Naive thymus-derived CD8-positive, alpha-beta T cell (primary cell): ENCODE measurements at regions of chr6 and their contacts with region 1.

Region 1: GRCh38 chr6:7107578-7108195 is at the start of gene RREB1:
- DNase-seq: peak; percentile 37 to 78 (median 56)
- ATAC-seq: peak; percentile 54
- H3K4me3 Mint-ChIP-seq: peak within 1 kb of the TSS; percentile 93 to 97 (median 94)
- H3K27ac Mint-ChIP-seq: peak within 1 kb of the TSS; percentile 95 to 98 (median 96)
- H3K4me1 Mint-ChIP-seq: peaks cover 27 to 40% (median 35%) of the 10 kb centered on the region in 4 donors
- H3K27me3 Mint-ChIP-seq: no peaks in the 10 kb centered on the region
- polyA plus RNA-seq, gene RREB1: 2.5 to 5.8 (median 5.0) TPM

Region 2: GRCh38 chr6:7051233-7052114 is 56.2 kb before region 1 on chr6:
- POLR2A ChIA-PET with region 1: interaction called, 22 read pairs
- DNase-seq: peak; percentile 53 to 79 (median 58)
- ATAC-seq: peak; percentile 78 to 84
- H3K4me3 Mint-ChIP-seq: peak overlapping the region; percentile 68 to 90 (median 75)
- H3K27ac Mint-ChIP-seq: peak overlapping the region in 6 of 10 donors; percentile 52 to 84 (median 80)
- H3K4me1 Mint-ChIP-seq: peaks cover 6 to 24% (median 14%) of the 10 kb centered on the region in 4 donors
- H3K27me3 Mint-ChIP-seq: no peaks in the 10 kb centered on the region

Region 3: DNA sequence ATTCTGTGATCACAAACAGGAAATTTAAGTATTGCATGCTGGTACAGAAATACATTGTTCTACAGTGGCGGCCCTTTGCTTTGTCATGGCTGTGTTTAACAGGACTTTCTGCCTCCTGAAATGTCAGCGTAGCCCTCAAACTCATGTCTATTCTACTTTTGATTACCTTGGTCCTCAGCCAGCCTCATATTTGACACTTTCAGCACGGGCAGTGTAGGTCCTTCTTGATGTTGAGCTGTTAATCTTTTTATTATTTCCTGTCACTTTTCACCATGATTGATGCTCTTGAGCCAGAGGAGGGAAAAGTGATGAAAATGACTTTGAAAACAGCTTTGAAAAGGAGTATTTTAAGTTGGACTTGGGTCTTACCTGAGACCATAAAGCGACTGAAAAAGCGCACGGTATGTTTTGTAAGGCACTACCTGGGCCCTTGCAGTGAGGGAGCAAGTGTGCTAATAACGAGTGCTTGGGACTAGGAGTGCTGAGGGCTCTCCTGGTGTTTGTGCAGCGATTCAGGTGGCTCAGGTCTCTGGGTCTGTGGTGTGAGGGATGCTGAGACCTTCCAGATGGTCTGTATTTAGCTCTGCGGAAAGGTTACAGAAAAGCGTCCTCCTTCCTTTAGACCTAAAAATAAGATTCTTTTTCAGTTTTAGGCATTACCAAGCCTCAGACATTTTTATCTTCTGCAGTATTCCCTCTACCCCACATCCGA is 45.1 kb before region 1 on chr6:
- POLR2A ChIA-PET with region 1: no interaction called
- DNase-seq: no peak
- ATAC-seq: no peak
- H3K4me3 Mint-ChIP-seq: no peak overlapping the region
- H3K27ac Mint-ChIP-seq: no peak overlapping the region
- H3K4me1 Mint-ChIP-seq: peaks cover 0 to 2% (median 0%) of the 10 kb centered on the region in 4 donors
- H3K27me3 Mint-ChIP-seq: no peaks in the 10 kb centered on the region

Region 4: DNA sequence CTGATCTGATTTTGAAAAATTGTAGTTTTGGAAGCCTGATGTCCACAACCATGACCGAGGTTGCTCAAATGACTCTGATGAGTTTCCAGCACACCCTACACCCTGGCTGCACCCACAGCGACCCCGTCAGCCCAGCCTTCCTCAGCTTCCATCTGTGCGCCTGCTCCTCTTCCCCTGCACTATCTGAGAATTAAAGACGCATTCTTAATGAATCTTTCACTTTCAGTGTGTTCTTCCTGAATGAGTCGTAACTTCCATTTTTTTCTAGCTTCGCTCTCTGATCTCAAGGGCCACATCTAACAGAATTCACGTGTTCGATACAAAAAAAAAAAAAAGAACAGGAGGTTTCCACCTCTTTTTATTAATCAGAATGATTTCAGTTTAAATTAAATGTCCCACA is 21.2 kb before region 1 on chr6:
- POLR2A ChIA-PET with region 1: interaction called, 24 read pairs
- DNase-seq: peak in 9 of 10 donors; percentile 7 to 52 (median 26)
- ATAC-seq: peak; percentile 71 to 82
- H3K4me3 Mint-ChIP-seq: peak overlapping the region; percentile 73 to 89 (median 85)
- H3K27ac Mint-ChIP-seq: peak overlapping the region; percentile 77 to 95 (median 90)
- H3K4me1 Mint-ChIP-seq: peaks cover 19 to 49% (median 40%) of the 10 kb centered on the region in 4 donors
- H3K27me3 Mint-ChIP-seq: no peaks in the 10 kb centered on the region

Region 5: GRCh38 chr6:7129784-7130569 is 22.3 kb after region 1 on chr6:
- POLR2A ChIA-PET with region 1: interaction called, 139 read pairs
- DNase-seq: no peak
- ATAC-seq: no peak
- H3K4me3 Mint-ChIP-seq: peak overlapping the region in 9 of 10 donors; percentile 36 to 77 (median 66)
- H3K27ac Mint-ChIP-seq: peak overlapping the region; percentile 45 to 96 (median 90)
- H3K4me1 Mint-ChIP-seq: peaks cover 52 to 90% (median 82%) of the 10 kb centered on the region in 4 donors
- H3K27me3 Mint-ChIP-seq: no peaks in the 10 kb centered on the region

Region 6: DNA sequence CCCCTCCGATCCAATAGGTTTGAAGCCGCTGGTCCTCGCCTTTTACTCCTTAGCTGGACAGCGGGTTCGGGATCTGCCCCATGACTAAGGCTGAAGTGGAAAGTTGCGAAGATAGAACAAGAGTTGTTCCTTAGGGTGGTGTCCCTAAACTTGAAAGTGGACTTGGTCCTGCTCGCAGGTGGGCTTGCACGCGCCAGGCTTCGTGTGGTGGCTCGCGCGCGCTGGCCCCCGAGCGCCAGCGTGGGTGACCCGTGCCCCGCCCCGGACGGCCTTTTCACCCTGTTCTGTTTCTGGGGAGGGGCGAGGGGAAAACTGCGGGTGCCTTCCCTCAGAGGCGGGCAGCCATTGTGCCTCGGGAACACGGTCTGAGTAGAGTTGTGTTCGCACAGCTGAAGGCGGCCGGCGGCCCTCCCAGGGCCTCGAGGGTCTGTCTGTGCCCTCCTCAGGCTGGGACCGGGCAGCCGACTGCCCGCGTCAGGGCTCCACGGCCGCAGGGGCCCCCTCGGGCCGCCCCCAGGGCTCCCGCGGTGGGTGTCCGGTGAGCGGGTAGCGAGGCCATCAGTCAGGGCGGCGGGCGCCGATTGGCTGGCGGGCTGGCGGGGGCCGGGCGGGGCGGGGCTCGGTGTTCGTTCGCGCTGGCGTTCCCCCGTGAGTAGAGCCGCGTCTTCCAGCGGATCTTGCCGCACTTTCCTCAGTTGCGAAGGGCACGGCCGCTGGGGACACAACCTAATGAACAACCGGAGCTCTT is 33.1 kb after region 1 on chr6:
- POLR2A ChIA-PET with region 1: interaction called, 20 read pairs
- DNase-seq: peak; percentile 59 to 86 (median 78)
- ATAC-seq: peak; percentile 74 to 81
- H3K4me3 Mint-ChIP-seq: peak overlapping the region; percentile 80 to 92 (median 88)
- H3K27ac Mint-ChIP-seq: peak overlapping the region; percentile 80 to 97 (median 94)
- H3K4me1 Mint-ChIP-seq: peaks cover 28 to 79% (median 62%) of the 10 kb centered on the region in 4 donors
- H3K27me3 Mint-ChIP-seq: no peaks in the 10 kb centered on the region

Region 7: GRCh38 chr6:7196019-7196402 is 88.3 kb after region 1 on chr6:
- POLR2A ChIA-PET with region 1: interaction called, 11 read pairs
- DNase-seq: peak in 5 of 10 donors; percentile 9 to 37 (median 32)
- ATAC-seq: peak; percentile 91
- H3K4me3 Mint-ChIP-seq: peak overlapping the region in 9 of 10 donors; percentile 38 to 86 (median 68)
- H3K27ac Mint-ChIP-seq: peak overlapping the region; percentile 45 to 95 (median 80)
- H3K4me1 Mint-ChIP-seq: peaks cover 18 to 50% (median 31%) of the 10 kb centered on the region in 4 donors
- H3K27me3 Mint-ChIP-seq: no peaks in the 10 kb centered on the region

Region 8: DNA sequence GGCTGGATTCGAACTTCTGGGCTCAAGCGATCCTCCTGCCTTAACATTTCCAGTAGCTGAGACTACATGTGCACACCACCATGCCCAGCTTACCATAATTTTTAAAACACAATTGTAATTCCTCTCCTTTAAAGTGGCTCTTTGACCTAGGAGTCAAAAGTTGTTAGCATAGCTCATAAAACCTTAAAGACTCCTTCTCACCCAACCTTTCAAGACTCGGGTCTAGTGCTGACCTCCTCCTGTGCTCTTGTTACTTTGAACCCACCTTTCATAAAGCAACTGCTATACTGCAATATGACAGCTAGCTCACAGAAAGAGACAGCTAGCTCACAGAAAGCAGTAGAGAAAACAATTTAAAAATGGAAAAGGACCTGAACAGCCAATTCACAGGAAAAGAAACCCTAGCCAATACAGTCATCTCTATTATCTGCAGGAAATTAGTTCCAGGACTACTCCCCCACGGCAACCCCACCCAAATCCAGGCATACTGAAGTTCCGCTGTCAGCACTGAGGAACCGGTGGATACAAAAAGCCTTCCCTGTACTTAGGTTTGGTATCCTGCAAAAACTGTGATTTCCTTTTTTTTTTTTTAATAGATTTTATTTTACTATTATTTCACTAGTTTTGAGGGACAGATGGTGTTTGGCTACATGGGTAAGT is 185.0 kb after region 1 on chr6:
- POLR2A ChIA-PET with region 1: no interaction called
- DNase-seq: no peak
- ATAC-seq: no peak
- H3K4me3 Mint-ChIP-seq: no peak overlapping the region
- H3K27ac Mint-ChIP-seq: peak overlapping the region in 6 of 10 donors; percentile 21 to 76 (median 60)
- H3K4me1 Mint-ChIP-seq: peaks cover 0 to 8% (median 2%) of the 10 kb centered on the region in 4 donors
- H3K27me3 Mint-ChIP-seq: no peaks in the 10 kb centered on the region